ENCODE measurements at regions of chr6 and their contacts with region 1.

Region 1: GRCh38 chr6:43506667-43507471 is 3.3 kb downstream of the LRRC73 start:
- DNase-seq: peak; percentile 91

Region 2: GRCh38 chr6:43185391-43185790 is 321.5 kb before region 1 on chr6:
- intact Hi-C with region 1: no loop called
- DNase-seq: no peak

Region 3: DNA sequence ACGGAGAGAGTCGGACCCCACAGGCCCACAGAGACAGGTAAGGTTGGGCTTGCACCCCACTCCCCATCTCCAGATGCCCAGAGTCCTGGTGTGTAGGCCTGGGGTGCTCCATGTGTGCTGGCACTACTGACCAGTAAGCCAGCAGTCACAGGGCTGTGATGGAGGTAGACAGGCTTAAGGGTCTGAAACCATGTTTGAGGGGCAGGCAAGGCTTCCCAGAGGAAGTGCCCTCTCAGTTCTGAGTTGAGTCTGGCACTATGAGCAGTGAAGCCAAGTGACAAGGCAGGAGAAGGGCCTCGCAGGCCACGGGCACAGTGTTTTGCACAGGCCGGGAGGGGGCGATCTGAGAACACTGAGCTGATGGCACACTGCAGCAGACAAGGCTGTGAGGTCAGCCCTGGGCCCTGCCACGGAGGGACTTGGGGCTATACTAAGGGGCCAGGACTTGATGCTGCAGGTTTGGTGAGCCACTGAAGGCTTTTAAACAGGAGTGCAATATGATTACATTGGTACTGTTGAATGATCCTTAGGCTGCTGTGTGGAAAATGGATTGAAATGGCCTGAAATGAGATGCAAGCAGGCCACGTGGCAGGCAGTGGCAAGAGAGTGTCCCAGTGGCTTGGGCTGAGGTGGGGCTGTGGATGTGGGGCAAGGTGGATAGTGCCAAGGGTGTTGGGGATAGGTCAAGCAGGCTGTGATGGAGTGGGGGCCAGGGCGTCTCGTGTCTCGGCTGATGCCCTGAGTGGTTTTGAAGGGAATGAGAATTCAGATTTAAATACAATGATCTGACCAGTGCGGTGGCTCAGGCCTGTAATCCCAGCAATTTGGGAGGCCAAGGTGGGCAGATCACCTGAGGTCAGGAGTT is 243.3 kb before region 1 on chr6:
- intact Hi-C with region 1: loop called in 1 of 2 experiments (anchors 5 kb)
- DNase-seq: peak; percentile 93

Region 4: DNA sequence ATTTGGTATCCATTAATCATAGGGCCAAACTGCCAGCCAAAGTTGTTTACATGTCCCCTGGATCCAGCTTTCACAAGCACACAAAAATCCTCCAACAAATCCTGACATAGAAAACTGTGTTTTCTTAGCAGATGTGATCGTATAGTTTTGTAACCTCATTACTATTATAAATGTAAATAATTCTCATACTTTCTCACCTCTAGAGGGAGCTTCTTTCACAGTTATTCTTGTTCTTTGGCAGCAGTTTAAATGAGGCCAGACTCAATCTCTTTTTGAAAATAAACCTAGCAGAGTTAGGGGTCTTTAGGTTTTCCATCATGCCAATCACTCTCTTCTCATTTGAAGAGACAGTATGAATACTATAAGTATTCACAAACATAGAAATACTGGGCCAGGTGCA is 120.4 kb before region 1 on chr6:
- intact Hi-C with region 1: loop called in 1 of 2 experiments (anchors 10 kb)
- DNase-seq: no peak

Region 5: GRCh38 chr6:43454696-43455530 is 52.0 kb before region 1 on chr6:
- intact Hi-C with region 1: loop called (anchors 5 kb)
- DNase-seq: peak; percentile 97

Measured in posterior vena cava (tissue), 2 donors.